Left ventricle myocardium inferior (tissue), 1 donor: ENCODE measurements at regions of chr1 and their contacts with region 1.

Region 1: GRCh38 chr1:180863158-180863775 is 49.4 kb upstream of the KIAA1614 start:
- DNase-seq: no peak
- H3K4me3 ChIP-seq: no peak overlapping the region
- H3K27ac ChIP-seq: no peak overlapping the region
- H3K4me1 ChIP-seq: peaks cover 13% of the 10 kb centered on the region
- H3K27me3 ChIP-seq: no peaks in the 10 kb centered on the region
- CTCF ChIP-seq: peak; percentile 79

Region 2: DNA sequence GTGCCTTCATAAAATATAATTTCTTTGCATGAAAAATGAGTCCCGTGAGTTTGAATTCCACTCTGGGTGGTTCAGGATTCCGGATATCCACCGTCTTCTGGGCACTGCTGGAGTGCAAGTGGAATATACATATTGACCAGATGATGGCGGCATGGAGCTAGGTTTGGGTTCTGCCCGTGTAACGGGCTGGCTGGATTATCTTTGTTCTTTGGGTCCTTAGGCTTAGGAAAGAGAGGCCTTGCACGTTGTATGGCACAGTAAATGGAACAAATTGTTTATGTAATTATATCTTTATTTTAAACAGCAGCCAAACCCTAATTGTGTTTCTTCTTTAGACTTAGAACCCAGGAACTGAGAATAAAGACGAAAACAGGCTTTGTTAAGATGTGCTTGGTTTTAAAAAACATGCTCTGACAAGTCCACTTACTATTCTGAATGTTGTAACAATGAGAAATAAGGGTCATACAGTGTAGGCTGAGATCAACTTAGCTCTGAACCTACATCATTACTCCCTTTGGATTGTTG is 347.3 kb before region 1 on chr1:
- intact Hi-C with region 1: loop called (anchors 5 kb)
- DNase-seq: peak; percentile 41
- H3K4me3 ChIP-seq: no peak overlapping the region
- H3K27ac ChIP-seq: peak overlapping the region; percentile 53
- H3K4me1 ChIP-seq: peaks cover 22% of the 10 kb centered on the region
- H3K27me3 ChIP-seq: no peaks in the 10 kb centered on the region
- CTCF ChIP-seq: peak; percentile 88

Region 3: GRCh38 chr1:180533266-180533987 is 329.8 kb before region 1 on chr1:
- intact Hi-C with region 1: loop called (anchors 5 kb)
- DNase-seq: peak; percentile 53
- H3K4me3 ChIP-seq: no peak overlapping the region
- H3K27ac ChIP-seq: peak overlapping the region; percentile 39
- H3K4me1 ChIP-seq: peaks cover 31% of the 10 kb centered on the region
- H3K27me3 ChIP-seq: no peaks in the 10 kb centered on the region
- CTCF ChIP-seq: peak; percentile 94